ENCODE measurements at regions of chr5 and their contacts with region 1.

Region 1: DNA sequence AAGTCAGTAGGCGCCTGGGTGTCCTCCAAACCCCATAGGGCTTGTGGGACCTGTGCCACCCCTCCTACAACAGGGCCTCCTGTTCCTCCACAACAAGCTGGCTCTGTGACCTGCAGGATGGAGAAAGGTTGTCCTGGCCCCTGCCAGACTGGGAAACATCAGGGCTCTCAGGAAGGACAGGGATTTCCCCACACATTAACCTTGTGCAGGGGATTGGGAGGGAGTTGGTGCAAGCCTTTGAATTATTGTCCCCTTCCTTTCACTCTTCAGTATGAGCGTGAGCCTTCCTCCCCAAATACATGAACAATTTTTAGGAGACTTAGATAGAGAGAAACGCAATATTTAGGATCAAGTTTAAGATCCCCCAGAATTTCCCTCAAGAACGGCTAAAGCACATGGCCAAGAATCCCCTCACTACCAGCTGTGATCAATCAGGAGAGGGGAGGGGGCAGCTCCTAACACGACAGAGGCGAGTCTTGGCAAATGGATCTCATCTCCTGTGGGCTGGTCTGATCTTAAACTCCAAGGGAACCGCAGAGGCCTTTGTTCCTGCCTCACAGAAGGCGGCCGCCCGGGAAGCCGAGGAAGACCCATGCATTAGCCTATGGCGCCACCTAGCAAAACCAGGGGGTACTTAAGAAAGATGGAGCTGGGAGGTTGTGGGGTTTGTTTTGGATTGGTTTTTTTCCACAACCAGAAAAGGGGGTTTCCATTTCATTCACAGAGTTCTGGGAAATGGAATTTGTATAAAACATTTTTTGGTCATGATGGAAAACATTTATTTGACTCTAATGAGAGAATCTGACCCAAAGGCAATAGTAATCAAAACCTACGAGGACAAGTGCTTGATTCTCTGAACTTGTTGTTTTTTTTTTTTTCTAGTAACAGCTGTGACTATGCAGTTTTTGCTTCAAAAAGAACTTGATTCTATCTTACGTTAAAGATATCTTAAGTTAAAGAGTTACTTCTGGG is 36.1 kb upstream of the OSMR start:
- H3K4me3 ChIP-seq: no peak overlapping the region
- H3K27ac ChIP-seq: no peak overlapping the region; the same call in 1 of the 2 replicates
- H3K4me1 ChIP-seq: peaks cover 14% of the 10 kb centered on the region
- CTCF ChIP-seq: peak; percentile 92

Region 2: GRCh38 chr5:38265546-38266179 is 544.0 kb before region 1 on chr5:
- CTCF ChIA-PET with region 1: interaction called, 29 read pairs
- POLR2A ChIA-PET with region 1: no interaction called
- H3K4me3 ChIP-seq: no peak overlapping the region
- H3K27ac ChIP-seq: no peak overlapping the region
- H3K4me1 ChIP-seq: peaks cover 10% of the 10 kb centered on the region; the same call in 1 of the 2 replicates
- CTCF ChIP-seq: peak; percentile 57

Region 3: DNA sequence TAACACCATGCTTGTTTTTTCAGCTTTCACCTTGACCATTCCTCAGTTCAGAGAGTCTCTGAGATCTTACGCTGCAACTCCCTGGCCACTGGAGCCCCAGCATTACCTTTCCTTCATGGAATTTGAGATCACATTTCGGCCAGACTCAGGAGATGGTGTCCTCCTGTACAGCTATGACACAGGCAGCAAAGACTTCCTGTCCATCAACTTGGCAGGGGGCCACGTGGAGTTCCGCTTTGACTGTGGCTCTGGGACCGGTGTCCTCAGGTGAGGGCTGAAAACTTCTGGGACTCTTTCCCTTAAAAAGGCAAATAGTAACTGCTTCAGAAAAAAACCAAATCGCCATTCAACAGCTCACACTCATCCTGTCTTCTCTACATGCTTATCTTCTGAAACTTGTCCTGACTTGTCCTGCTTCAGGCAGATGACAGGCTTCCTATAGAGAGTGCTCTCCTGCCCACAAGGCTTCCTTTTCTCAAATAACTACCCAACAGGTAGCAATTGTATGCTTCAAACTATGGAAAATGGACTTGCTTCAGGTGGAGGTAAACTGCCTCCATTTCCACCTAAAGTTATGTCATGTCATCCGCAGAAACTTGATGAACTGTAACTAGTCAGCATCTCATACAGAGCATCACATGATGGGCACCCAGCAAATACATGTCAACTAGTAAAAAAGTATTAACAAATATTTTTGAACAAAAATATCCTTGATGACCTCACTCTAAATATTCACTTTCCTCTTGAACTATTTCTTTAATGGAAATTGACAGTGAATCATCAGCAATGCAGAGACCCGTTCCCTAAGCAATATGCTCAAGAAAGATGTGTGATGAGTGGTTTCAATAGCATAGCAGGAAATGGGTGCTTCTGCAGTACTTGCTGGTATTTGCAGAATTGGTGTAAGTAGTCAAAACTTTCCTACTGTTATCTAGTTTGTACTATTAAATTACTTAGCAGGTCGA is 382.4 kb before region 1 on chr5:
- CTCF ChIA-PET with region 1: interaction called, 163 read pairs
- POLR2A ChIA-PET with region 1: no interaction called
- H3K4me3 ChIP-seq: no peak overlapping the region
- H3K27ac ChIP-seq: peak overlapping the region; percentile 29; the same call in 1 of the 2 replicates
- H3K4me1 ChIP-seq: peaks cover 15% of the 10 kb centered on the region; the same call in 1 of the 2 replicates
- CTCF ChIP-seq: no peak

Region 4: DNA sequence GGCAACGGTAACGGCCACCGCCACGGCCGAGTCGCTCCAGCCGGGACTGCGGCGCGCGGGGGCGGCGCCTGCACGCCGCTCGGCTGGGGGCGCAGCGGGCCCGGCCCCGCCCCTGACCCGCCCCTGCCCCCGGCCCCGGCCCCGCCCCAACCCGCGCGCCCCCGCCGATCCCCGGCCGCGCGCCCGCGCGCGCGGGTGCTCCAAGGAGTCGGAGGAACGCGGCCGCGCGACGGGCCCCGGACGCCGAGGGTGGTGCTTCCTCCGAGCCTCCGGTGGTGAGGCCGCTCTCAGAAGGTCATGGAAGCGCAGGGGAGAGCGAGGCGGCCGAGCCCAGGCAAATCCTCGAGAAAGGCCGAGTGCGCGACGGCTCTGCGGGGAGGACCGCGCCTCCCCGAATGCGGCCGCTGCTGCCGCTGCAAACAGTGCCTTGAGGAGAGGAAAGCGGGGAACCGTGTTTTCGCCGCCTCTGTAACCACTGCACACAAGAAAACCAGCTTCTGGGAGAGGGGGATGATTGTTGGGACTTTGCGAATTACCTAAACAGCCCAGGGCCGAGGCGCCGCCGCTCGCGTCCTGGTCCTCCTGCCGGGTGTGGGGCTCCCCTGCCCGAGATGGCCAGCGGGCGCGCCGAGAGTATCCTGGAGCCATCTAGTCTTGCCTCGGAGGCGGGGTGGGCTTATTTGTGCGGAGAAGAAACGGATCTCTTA is 252.9 kb before region 1 on chr5 and contains the start of gene LIFR:
- CTCF ChIA-PET with region 1: interaction called, 43 read pairs
- POLR2A ChIA-PET with region 1: no interaction called
- H3K4me3 ChIP-seq: peak within 1 kb of the TSS; percentile 91
- H3K27ac ChIP-seq: peak within 1 kb of the TSS; percentile 99
- H3K4me1 ChIP-seq: peaks cover 24% of the 10 kb centered on the region
- CTCF ChIP-seq: peak; percentile 69

Region 5: DNA sequence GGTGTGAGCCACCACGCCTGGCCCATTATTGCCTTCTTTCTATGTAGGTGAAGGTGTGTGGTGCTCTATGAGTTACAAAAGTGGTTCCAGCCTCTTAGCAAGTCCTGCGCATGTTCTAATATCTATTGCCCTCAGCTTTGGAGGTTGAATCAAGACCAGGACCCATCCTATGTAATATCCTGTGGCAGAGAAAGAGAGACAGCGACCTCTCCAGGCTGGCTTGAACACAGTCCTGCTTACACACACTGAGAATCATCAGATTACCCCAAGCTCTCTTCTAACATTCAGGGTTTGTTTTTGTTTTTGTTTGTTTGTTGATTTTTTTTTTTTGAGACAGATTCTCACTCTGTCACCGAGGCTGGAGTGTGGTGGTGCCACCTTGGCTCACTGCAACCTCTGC is 58.6 kb before region 1 on chr5:
- CTCF ChIA-PET with region 1: interaction called, 20 read pairs
- POLR2A ChIA-PET with region 1: no interaction called
- H3K4me3 ChIP-seq: no peak overlapping the region
- H3K27ac ChIP-seq: no peak overlapping the region
- H3K4me1 ChIP-seq: no peaks in the 10 kb centered on the region
- CTCF ChIP-seq: no peak

Region 6: DNA sequence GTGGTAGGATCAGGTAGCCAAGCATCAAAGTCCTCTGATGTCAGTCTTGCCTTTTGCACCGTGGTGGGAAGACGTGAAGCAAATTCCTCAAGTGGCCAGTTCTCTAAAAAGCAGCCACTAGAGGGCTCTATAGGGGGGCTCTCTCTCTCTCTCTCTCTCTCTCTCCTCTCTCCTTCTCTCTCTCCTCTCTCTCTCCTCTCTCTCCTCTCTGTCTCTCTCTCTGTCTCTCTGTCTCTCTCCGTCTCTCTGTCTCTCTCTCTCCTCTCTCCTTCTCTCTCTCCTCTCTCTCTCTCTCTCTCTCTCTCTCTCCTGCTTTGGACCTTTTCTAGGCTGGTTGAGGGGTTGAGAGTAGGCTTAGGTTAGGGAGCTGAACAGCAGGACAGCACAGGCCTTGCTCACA is 22.2 kb after region 1 on chr5:
- CTCF ChIA-PET with region 1: interaction called, 11 read pairs
- POLR2A ChIA-PET with region 1: no interaction called
- H3K4me3 ChIP-seq: no peak overlapping the region
- H3K27ac ChIP-seq: no peak overlapping the region
- H3K4me1 ChIP-seq: peaks cover 2% of the 10 kb centered on the region; the same call in 1 of the 2 replicates
- CTCF ChIP-seq: no peak; the same call in 1 of the 2 replicates

Region 7: DNA sequence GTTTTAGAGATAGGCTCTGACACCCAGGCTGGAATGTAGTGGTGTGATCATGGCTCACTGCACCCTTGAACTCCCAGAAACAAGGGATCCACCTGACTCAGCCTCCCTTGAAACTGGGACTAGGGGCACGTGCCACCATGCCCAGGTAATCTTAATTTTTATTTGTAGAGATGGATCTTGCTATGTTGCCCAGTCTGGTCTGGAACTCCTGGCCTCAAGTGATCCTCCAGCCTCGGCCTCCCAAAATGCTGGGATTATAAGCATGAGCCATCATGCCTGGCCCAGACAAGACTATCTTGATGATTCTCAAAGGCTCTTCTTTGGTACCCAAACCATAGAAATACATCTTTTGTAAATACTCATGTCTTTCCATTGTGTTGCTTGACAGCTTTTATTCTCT is 47.0 kb after region 1 on chr5:
- CTCF ChIA-PET with region 1: no interaction called
- POLR2A ChIA-PET with region 1: no interaction called
- H3K4me3 ChIP-seq: no peak overlapping the region
- H3K27ac ChIP-seq: no peak overlapping the region
- H3K4me1 ChIP-seq: no peaks in the 10 kb centered on the region
- CTCF ChIP-seq: no peak

Region 8: GRCh38 chr5:39005566-39006232 is 196.0 kb after region 1 on chr5:
- CTCF ChIA-PET with region 1: no interaction called
- POLR2A ChIA-PET with region 1: no interaction called
- H3K4me3 ChIP-seq: no peak overlapping the region
- H3K27ac ChIP-seq: no peak overlapping the region
- H3K4me1 ChIP-seq: no peaks in the 10 kb centered on the region
- CTCF ChIP-seq: peak; percentile 29; the same call in 1 of the 2 replicates

Measured in HEK293 (cell line).